Pancreas (tissue), 10 donors: ENCODE measurements at regions of chr4 and their contacts with region 1.

Region 1: GRCh38 chr4:6720202-6720699 is 4.3 kb downstream of the BLOC1S4 start:
- DNase-seq: peak; percentile 65 to 97 (median 84)
- ATAC-seq: peak; percentile 30 to 70 (median 60)
- H3K4me3 ChIP-seq: no peak overlapping the region
- H3K27ac ChIP-seq: no peak overlapping the region
- H3K4me1 ChIP-seq: peaks cover 0 to 16% (median 10%) of the 10 kb centered on the region in 3 donors
- H3K27me3 ChIP-seq: no peaks in the 10 kb centered on the region
- CTCF ChIP-seq: peak; percentile 61 to 89 (median 86)

Region 2: GRCh38 chr4:6779667-6780555 is 59.7 kb after region 1 on chr4:
- intact Hi-C with region 1: no loop called
- DNase-seq: no peak
- ATAC-seq: no peak
- H3K4me3 ChIP-seq: no peak overlapping the region
- H3K27ac ChIP-seq: no peak overlapping the region
- H3K4me1 ChIP-seq: peaks cover 0 to 11% (median 6%) of the 10 kb centered on the region in 3 donors
- H3K27me3 ChIP-seq: no peaks in the 10 kb centered on the region
- CTCF ChIP-seq: no peak

Region 3: GRCh38 chr4:6873792-6874461 is 153.7 kb after region 1 on chr4:
- intact Hi-C with region 1: loop called (anchors 2 to 10 kb)
- DNase-seq: peak; percentile 46 to 90 (median 77)
- ATAC-seq: peak; percentile 85 to 91 (median 90)
- H3K4me3 ChIP-seq: no peak overlapping the region
- H3K27ac ChIP-seq: no peak overlapping the region
- H3K4me1 ChIP-seq: no peaks in the 10 kb centered on the region
- H3K27me3 ChIP-seq: no peaks in the 10 kb centered on the region
- CTCF ChIP-seq: peak; percentile 74 to 90 (median 80)